Posterior cingulate gyrus (tissue), 11 donors: ENCODE measurements at regions of chr20 and their contacts with region 1.

Region 1: GRCh38 chr20:37992802-37993409 is 40.4 kb downstream of the TTI1 start:
- DNase-seq: no peak

Region 2: DNA sequence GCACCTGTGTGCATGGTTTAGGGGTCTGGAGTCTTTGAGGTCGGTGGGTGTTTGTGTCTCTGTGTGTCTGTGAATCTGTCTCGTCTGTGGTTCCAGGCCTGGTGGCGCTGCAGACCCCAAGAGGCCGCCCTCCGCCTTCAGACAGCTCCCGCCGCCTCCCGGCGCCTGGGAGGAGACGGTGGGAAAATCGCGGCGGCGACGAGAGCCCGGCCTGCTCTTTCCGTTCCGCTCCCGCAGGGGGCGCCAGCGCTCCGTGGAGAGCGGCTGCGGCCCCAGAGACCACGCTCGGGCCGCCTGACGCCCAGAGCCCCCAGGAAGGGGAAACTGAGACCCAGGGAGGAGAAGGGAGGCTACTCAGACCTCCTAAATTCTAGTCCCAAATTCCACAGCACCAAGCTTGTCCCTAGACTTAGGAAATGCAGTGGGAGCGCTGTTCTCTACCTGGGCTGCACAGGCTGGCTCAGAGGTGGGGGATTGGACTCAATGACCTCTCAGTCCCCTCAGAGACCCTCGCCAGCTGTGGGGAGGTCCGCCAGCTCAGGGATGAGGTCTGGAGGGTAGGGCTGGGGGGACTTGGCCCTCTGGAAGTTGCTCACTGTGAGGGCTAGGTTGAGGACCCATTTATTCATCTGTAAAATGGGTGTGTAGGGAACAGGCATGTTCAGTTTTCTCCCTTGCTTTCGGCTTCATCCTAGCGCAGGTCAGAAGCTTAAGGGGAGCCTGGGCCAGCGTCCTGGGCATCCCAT is 428.3 kb before region 1 on chr20:
- intact Hi-C with region 1: loop called (anchors 2 kb)
- DNase-seq: peak in 9 of 10 donors; percentile 35 to 93 (median 55)